Spleen (tissue), 13 donors: ENCODE measurements at regions of chr3 and their contacts with region 1.

Region 1: GRCh38 chr3:52238761-52239701 is at the start of gene TWF2:
- DNase-seq: peak; percentile 95
- H3K4me3 ChIP-seq: peak within 1 kb of the TSS; percentile 90 to 98 (median 94)
- H3K27ac ChIP-seq: peak within 1 kb of the TSS; percentile 71 to 98 (median 94)
- H3K4me1 ChIP-seq: peaks cover 26 to 87% (median 67%) of the 10 kb centered on the region in 6 donors
- H3K27me3 ChIP-seq: no peaks in the 10 kb centered on the region
- CTCF ChIP-seq: peak in 10 of 11 experiments; percentile 31 to 77 (median 60)
- POLR2A ChIP-seq: no peak
- total RNA-seq, gene TWF2: 57.5 to 109 (median 68.2) TPM

Region 2: GRCh38 chr3:52278510-52279069 is 39.6 kb after region 1 on chr3 and contains the start of gene WDR82:
- intact Hi-C with region 1: loop called (anchors 5 kb)
- DNase-seq: peak; percentile 100
- H3K4me3 ChIP-seq: peak within 1 kb of the TSS; percentile 66 to 95 (median 82)
- H3K27ac ChIP-seq: peak within 1 kb of the TSS; percentile 94 to 99 (median 98)
- H3K4me1 ChIP-seq: peaks cover 40 to 89% (median 68%) of the 10 kb centered on the region in 6 donors
- H3K27me3 ChIP-seq: no peaks in the 10 kb centered on the region
- CTCF ChIP-seq: peak in 9 of 11 experiments; percentile 30 to 64 (median 46)
- POLR2A ChIP-seq: peak in 1 of 3 donors; percentile 60
- total RNA-seq, gene WDR82: 60.5 to 80.6 (median 72.0) TPM

Region 3: GRCh38 chr3:52428151-52429005 is 189.3 kb after region 1 on chr3:
- intact Hi-C with region 1: no loop called
- DNase-seq: peak; percentile 40
- H3K4me3 ChIP-seq: no peak overlapping the region
- H3K27ac ChIP-seq: peak overlapping the region in 1 of 8 donors; percentile 21
- H3K4me1 ChIP-seq: peaks cover 0 to 22% (median 10%) of the 10 kb centered on the region in 6 donors
- H3K27me3 ChIP-seq: no peaks in the 10 kb centered on the region
- CTCF ChIP-seq: peak; percentile 43 to 74 (median 64)
- POLR2A ChIP-seq: no peak